Left cardiac atrium (tissue), 4 donors: ENCODE measurements at regions of chr13 and their contacts with region 1.

Region 1: GRCh38 chr13:77779552-77780272 is 82.2 kb downstream of the SLAIN1 start:
- DNase-seq: no peak
- ATAC-seq: peak; percentile 57 to 76

Region 2: DNA sequence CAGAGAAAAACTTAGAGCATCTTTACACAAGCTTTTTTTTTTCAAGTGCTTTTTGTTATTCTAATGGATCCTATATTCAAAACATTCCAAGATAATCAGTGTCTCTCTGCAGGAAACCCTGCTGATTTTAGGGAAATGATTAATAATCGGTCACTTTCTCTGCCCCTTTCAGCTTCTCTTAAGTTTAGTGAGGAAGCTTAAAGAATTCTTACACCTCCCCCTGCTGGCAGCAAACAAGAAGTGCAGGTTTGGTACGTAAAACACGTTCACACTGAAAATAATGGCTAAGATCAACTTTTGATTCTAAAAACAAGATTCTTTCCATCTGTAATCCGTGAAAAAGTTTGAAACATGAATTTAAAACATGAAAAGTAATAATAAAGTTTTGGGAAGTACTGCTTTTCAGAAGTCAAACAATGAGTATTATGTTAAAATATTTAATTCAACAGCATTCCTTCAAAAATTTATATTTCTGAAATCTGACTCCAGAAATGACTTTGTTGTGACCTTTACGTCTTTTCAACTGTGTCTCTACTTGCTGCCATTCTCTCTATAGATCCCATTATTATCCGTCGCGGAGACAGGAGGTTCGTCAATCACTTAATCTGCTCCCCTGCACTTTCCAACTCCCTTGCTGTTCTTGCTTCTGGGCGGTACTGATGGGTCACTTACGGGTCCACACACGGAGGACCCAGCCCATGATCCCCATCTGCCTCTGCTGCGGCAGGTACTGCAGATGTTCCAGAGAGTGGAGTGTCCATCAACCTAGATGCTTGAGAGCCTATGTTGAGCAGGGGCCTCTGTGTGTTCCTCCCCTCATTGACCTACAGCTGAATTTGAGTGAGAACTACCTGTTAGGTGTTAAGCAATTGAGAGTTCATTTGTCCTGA is 342.0 kb after region 1 on chr13:
- intact Hi-C with region 1: loop called (anchors 1 to 5 kb)
- DNase-seq: peak; percentile 53
- ATAC-seq: peak; percentile 30